Adrenal gland (tissue), 19 donors: ENCODE measurements at regions of chr12 and their contacts with region 1.

Region 1: DNA sequence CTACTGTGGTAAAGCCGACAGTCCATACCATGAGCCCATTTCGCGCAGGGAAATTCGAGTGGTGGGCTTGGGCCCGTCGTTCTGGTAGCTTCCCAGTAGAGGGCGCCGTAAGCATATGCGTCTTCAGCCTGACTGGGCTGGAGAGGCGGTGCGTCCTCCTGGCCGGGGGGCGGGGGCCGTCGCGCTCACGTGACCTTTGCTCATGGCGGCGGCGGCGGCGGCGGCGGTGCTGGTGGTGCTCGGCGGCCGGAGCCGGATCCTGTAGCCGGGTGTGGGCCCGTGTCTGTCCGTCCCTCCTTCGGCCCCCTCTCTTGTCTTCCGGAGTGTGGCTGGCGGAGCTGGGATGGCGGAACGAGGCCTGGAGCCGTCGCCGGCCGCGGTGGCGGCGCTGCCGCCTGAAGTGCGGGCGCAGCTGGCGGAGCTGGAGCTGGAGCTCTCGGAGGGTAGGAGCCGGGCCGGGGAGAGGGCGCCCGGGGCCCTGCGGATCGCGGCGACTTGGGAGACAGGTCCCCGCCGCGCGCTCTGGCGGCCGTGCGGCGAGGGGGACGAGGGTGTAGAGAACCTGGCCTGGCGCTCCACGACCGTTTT is at the start of gene DIP2B:
- DNase-seq: peak; percentile 94 to 98 (median 97)
- H3K4me3 ChIP-seq: peak within 1 kb of the TSS; percentile 82 to 96 (median 90)
- H3K27ac ChIP-seq: peak within 1 kb of the TSS; percentile 58 to 97 (median 89)
- H3K4me1 ChIP-seq: peaks cover 19 to 44% of the 10 kb centered on the region in 2 donors
- H3K27me3 ChIP-seq: no peaks in the 10 kb centered on the region
- CTCF ChIP-seq: peak; percentile 88 to 99 (median 93)
- POLR2A ChIP-seq: peak; percentile 48 to 77
- total RNA-seq, gene DIP2B: 17.6 to 46.6 (median 32.5) TPM

Region 2: DNA sequence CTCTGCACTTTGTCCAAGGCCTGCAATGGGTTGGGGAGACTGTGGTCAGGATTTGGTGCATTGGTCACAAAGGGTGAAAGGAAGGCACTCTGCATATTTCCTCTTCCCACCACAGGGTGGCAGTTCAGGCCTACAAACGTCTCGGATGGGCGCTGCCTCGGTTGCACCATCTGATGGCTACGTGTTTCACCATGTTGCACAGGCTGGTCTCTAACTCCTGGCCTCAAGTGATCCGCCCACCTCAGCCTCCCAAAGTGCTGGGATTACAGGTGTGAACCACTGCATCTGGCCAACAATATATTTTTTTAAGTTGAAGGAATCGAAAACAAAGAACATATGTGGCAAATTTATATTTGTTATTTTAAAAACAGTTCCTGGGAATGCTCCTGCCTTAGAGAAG is 728.5 kb before region 1 on chr12:
- intact Hi-C with region 1: no loop called
- DNase-seq: peak; percentile 55 to 87 (median 78)
- H3K4me3 ChIP-seq: no peak overlapping the region
- H3K27ac ChIP-seq: no peak overlapping the region
- H3K4me1 ChIP-seq: no peaks in the 10 kb centered on the region
- H3K27me3 ChIP-seq: no peaks in the 10 kb centered on the region
- CTCF ChIP-seq: peak; percentile 56 to 93 (median 86)
- POLR2A ChIP-seq: no peak

Region 3: DNA sequence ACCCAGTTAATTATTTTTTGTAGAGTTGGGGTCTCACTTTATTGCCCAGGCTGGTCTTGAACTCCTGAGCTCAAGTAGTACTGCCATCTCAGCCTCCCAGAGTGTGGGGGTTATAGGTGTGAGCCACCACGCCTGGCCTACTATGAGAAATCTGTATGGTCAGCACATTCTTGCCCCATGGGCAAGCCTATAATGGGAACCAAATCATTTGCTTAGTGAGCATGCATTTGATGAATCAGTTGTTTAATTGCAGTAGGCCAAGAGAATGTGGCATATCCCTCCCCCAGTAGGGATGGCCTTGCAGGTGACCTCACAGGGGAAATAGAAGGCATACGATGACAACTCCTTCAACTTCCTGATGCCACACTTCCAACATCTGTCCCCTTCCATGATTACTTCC is 122.6 kb after region 1 on chr12:
- intact Hi-C with region 1: no loop called
- DNase-seq: no peak
- H3K4me3 ChIP-seq: no peak overlapping the region
- H3K27ac ChIP-seq: no peak overlapping the region
- H3K4me1 ChIP-seq: peaks cover 0 to 10% of the 10 kb centered on the region in 2 donors
- H3K27me3 ChIP-seq: no peaks in the 10 kb centered on the region
- CTCF ChIP-seq: no peak
- POLR2A ChIP-seq: no peak

Region 4: GRCh38 chr12:50637870-50638481 is 133.1 kb after region 1 on chr12:
- intact Hi-C with region 1: loop called (anchors 5 kb)
- DNase-seq: no peak
- H3K4me3 ChIP-seq: no peak overlapping the region
- H3K27ac ChIP-seq: no peak overlapping the region
- H3K4me1 ChIP-seq: peaks cover 0 to 18% of the 10 kb centered on the region in 2 donors
- H3K27me3 ChIP-seq: no peaks in the 10 kb centered on the region
- CTCF ChIP-seq: peak; percentile 44 to 76 (median 66)
- POLR2A ChIP-seq: no peak

Region 5: DNA sequence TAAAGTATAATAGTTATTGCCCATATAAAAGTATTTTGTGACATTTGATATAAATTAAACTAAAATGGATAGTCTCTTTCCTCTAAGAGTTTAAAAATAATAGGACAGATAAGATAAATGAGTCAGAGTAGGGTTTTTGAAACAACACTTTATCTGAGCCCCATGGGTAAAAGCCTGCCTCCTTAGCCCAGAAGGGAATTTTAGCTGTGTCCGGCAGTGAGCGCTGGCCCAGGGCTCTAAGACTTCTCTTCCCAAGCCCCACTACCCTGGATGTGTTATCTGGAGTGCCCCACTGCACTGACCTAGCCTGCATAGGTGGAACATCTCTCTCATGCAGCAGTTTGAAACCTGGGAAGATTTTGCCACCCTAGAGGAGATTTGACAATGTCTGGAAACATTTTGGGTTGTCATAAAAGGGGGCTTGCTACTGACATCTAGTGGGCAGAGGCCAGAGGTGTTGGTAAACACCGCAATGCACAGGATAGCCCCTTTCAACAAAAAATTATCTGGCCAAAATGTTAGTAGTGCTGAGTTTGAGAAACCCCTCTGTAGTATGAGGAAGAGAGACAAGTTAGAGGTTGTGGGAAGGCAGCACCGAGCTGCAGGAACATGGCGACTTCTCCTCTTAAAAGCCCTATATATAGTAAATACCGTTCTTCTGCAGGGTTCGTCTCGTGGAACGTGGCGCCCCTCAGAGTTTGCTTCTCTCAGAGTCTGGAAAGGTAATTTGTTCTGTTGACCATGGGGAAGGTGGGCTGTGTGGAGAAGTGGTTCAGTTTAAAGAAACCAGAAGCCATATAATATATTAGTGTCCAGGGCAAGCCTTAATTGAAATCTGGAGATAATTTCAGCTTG is 229.7 kb after region 1 on chr12:
- intact Hi-C with region 1: loop called in 1 of 2 experiments (anchors 10 kb)
- DNase-seq: peak in 1 of 7 donors; percentile 27
- H3K4me3 ChIP-seq: no peak overlapping the region
- H3K27ac ChIP-seq: peak overlapping the region in 1 of 5 donors; percentile 17
- H3K4me1 ChIP-seq: no peaks in the 10 kb centered on the region
- H3K27me3 ChIP-seq: no peaks in the 10 kb centered on the region
- CTCF ChIP-seq: peak in 5 of 6 experiments; percentile 30 to 47 (median 45)
- POLR2A ChIP-seq: no peak

Region 6: GRCh38 chr12:50799908-50800307 is 295.0 kb after region 1 on chr12:
- intact Hi-C with region 1: no loop called
- DNase-seq: no peak
- H3K4me3 ChIP-seq: no peak overlapping the region
- H3K27ac ChIP-seq: no peak overlapping the region
- H3K4me1 ChIP-seq: no peaks in the 10 kb centered on the region
- H3K27me3 ChIP-seq: no peaks in the 10 kb centered on the region
- CTCF ChIP-seq: no peak
- POLR2A ChIP-seq: no peak